Right ventricle myocardium superior (tissue), 1 donor: ENCODE measurements at regions of chr7 and their contacts with region 1.

Region 1: DNA sequence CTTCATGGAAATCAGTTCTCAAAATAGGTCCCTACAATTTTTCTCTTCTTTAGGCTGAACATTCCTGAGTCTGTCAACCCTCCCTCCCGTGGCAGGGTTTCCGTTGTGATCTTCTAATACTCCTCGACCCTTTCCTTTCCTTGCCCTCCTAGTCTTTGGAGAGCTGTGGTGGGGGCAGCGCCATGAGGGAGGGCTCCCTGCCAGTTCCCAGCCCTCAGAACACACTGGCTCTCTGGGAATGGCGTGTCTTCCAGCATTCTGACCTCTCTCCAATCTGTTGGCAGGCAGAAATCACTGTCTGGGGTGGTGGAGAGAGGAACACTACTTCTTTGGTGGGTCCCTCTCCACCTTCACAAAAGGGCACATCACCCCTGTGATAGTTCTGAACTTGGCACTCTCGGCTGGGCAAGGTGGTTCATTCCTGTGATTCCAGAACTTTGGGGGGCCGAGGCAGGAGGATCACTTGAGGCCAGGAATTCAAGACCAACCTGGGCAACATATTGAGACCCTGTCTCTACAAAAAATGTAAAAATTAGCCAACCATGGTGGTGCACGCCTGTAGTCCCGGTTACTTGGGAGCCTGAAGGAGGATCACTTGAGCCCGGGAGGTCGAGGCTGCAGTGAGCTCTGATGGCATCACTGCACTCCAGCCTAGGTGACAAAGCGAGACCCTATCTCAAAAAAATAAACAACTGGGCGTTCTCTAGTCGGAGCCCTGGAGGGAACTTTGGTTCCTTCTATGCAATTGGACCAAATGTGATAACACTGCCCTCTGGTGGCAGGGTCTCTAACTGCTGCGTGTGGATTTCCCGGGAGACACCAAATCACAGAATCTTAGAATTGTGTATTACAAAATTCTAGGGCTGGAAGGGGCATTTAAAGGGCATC is 13.1 kb upstream of the ARPC1A start:
- DNase-seq: peak; percentile 72
- ATAC-seq: peak; percentile 83

Region 2: DNA sequence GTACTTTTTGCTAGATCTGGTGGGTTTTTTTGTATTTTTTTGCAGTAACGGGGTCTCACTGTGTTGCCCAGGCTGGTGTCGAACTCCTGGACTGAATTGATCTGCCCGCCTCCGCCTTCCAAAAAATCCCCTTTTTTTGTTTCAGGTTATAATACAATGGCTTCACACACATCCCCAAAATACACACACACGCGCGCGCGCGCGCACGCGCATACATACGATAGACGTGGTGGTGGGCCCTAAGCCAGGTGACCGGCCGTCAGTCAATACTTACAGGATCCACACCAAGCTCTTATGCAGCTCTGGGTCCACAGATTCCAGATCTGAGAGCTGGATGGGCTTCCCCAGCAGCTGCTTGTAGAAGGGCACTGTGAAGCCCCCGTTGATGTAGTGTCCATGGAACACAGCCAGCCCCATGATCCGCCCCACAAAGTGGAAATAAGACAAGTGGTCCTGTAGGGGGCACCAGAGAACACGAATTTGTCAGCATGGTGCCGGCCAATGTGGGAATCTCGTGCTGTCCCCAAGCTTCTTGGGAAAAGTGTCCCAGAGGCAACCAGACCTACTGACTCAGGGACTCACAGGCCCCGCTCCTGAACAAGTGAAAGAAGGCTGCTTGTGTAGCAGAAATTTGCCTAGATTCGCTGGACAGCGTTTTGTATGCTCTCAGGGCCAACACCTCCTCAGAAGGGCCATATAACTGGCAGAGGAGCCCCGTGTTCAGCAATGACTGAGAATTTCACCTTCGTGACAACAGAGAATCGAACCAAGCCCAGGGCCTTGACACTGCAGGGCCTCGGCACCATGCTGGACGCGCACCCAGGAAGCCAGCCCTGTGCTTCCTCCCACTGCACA is 272.2 kb before region 1 on chr7:
- intact Hi-C with region 1: loop called (anchors 2 kb)
- DNase-seq: peak; percentile 77
- ATAC-seq: peak; percentile 90

Region 3: GRCh38 chr7:99146979-99147378 is 165.6 kb before region 1 on chr7:
- intact Hi-C with region 1: loop called (anchors 5 kb)
- DNase-seq: no peak
- ATAC-seq: no peak

Region 4: GRCh38 chr7:99353871-99354270 is 41.3 kb after region 1 on chr7:
- intact Hi-C with region 1: no loop called
- DNase-seq: no peak
- ATAC-seq: no peak

Region 5: DNA sequence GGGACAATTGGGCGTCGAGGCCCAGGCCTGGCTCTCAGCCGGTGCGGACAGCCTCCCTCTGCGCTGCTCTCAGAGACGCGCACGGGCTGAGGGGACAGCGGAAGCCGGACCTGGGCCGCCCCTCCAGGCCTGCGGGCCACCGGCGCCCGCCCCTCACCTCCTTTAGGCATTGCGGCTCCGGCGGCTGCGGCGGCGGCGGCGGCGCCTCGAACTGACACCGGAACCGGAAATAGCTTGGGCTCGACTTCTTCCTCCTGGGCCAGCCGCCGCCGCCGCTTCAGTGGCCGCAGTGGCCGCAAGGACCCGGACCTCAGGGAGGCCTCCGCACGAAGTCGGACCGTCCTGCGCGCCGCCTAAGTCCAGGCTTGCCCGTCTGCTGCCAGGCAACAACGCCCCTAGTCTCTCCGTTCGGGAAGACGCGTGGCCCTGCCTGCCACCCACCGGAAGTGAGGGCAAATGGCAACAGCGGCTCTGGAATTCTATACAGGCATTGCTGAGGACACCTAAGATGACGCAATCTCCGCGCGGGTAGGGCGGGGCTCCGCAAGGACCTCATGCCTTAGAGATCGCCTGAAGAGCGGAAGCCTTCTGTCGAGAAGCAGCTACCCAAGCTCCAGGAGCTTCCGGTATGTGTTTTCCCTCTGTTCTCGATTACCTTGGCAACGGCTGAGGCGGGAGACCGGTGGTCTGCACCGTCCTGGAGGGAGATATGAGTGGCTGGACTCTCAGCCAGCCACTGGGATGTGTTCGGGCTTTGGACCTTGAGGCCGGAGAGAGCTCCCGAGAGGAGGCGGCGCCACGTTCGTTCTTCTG is 96.0 kb after region 1 on chr7 and contains the starts of genes BUD31 and PDAP1:
- intact Hi-C with region 1: no loop called
- DNase-seq: peak; percentile 96
- ATAC-seq: peak; percentile 97
- total RNA-seq, gene BUD31: 31.5 TPM
- total RNA-seq, gene PDAP1: 97.7 TPM